ENCODE measurements at regions of chr2 and their contacts with region 1.

Region 1: GRCh38 chr2:173962031-173962430 is 3.1 kb downstream of the SP3 start:
- DNase-seq: peak in 1 of 35 experiments; percentile 22
- ATAC-seq: no peak
- H3K4me3 ChIP-seq: peak overlapping the region; percentile 25 to 67
- H3K4me3 Mint-ChIP-seq: peak overlapping the region; percentile 85 to 98 (median 94)
- H3K27ac ChIP-seq: peak overlapping the region; percentile 93
- H3K27ac Mint-ChIP-seq: peak overlapping the region; percentile 86 to 95
- H3K4me1 ChIP-seq: peaks cover 19 to 46% of the 10 kb centered on the region in 2 experiments
- H3K4me1 Mint-ChIP-seq: peaks cover 61 to 69% (median 65%) of the 10 kb centered on the region in 3 donors
- H3K27me3 ChIP-seq: no peaks in the 10 kb centered on the region
- H3K27me3 Mint-ChIP-seq: no peaks in the 10 kb centered on the region

Region 2: DNA sequence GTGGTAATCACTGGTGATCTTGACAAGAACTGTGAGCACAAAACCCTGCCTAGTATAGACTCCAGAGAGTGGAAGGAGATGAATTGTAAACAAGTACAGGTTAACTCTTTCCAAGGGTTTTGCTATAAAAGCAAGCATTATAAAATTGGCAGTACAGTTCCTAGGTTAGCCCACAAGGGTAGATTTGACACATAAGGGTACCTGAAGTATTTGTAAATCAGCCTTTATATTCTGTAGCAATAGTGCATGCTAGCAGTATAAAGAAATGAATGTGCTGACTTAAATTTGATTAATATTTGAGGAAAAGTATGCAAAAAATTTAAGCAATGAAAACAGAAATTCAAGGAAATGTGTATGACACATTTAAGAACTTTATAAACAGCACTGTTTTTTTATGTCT is 39.3 kb before region 1 on chr2:
- CTCF ChIA-PET with region 1: no interaction called
- POLR2A ChIA-PET with region 1: interaction called in 1 of 2 experiments, 11 read pairs
- DNase-seq: no peak
- ATAC-seq: peak in 1 of 4 experiments; percentile 31
- H3K4me3 ChIP-seq: no peak overlapping the region
- H3K4me3 Mint-ChIP-seq: peak overlapping the region in 1 of 3 donors; percentile 19
- H3K27ac ChIP-seq: no peak overlapping the region
- H3K27ac Mint-ChIP-seq: peak overlapping the region in 1 of 2 donors; percentile 77
- H3K4me1 ChIP-seq: peaks cover 10 to 20% of the 10 kb centered on the region in 2 experiments
- H3K4me1 Mint-ChIP-seq: peaks cover 79 to 80% (median 80%) of the 10 kb centered on the region in 3 donors
- H3K27me3 ChIP-seq: no peaks in the 10 kb centered on the region
- H3K27me3 Mint-ChIP-seq: no peaks in the 10 kb centered on the region

Region 3: DNA sequence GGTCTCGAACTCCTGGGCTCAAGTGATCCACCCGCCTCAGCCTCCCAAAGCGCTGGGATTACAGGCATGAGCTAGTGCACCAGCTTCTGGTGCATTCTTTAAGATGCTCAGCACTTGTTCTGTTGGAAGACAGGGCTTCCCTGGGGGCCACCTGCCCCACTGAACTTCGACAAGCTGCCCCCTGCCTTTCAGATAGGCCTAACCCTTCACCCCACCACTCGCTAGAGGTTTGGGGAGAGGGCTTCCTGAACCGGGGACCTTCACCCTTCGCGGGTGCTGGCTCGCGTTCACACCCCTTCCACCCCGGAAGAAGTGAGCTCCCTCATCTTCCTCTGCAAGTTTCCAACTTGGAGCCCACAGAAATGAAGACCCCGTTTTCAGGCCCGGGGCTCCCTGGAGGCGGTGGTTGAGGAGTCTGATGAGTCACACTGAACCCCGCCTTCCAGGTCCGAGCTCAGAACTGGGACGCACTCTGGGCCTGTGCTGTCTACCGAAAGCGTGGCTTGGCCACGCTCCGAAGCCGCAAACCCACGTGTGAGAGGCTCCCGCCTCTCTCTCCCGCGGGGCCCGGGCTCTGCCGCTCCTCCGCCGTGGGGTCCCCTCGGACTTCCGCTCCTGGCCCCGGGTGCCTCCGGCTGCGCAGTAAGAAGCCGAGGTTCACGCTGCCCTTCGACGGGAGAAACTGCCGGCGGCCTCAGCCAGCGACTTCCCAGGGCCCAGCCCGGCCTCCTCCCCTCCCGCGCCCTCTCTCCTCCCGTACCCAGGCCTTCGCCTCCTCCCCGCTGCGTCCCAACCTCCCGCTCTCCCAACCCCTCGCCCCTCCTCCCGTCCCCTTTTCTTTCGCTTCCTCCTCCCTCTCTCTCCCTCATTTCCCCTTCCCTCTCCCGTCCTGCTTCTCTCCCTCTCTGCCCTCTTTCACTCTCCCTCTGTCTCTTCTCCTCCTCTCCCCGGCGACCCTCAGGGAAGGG is 50.6 kb after region 1 on chr2:
- CTCF ChIA-PET with region 1: no interaction called
- POLR2A ChIA-PET with region 1: interaction called in 1 of 2 experiments, 19 read pairs
- DNase-seq: peak in 26 of 35 experiments; percentile 3 to 49 (median 18)
- ATAC-seq: peak; percentile 54 to 81 (median 69)
- H3K4me3 ChIP-seq: peak overlapping the region; percentile 47 to 74
- H3K4me3 Mint-ChIP-seq: peak overlapping the region; percentile 53 to 72 (median 69)
- H3K27ac ChIP-seq: no peak overlapping the region
- H3K27ac Mint-ChIP-seq: peak overlapping the region in 1 of 2 donors; percentile 24
- H3K4me1 ChIP-seq: peaks cover 0 to 15% of the 10 kb centered on the region in 2 experiments
- H3K4me1 Mint-ChIP-seq: peaks cover 13 to 19% (median 13%) of the 10 kb centered on the region in 3 donors
- H3K27me3 ChIP-seq: peaks cover 0 to 20% of the 10 kb centered on the region in 2 experiments
- H3K27me3 Mint-ChIP-seq: peaks cover 3 to 15% of the 10 kb centered on the region in 2 donors